GM10248 (cell line): ENCODE measurements at regions of chr2 and their contacts with region 1.

Region 1: DNA sequence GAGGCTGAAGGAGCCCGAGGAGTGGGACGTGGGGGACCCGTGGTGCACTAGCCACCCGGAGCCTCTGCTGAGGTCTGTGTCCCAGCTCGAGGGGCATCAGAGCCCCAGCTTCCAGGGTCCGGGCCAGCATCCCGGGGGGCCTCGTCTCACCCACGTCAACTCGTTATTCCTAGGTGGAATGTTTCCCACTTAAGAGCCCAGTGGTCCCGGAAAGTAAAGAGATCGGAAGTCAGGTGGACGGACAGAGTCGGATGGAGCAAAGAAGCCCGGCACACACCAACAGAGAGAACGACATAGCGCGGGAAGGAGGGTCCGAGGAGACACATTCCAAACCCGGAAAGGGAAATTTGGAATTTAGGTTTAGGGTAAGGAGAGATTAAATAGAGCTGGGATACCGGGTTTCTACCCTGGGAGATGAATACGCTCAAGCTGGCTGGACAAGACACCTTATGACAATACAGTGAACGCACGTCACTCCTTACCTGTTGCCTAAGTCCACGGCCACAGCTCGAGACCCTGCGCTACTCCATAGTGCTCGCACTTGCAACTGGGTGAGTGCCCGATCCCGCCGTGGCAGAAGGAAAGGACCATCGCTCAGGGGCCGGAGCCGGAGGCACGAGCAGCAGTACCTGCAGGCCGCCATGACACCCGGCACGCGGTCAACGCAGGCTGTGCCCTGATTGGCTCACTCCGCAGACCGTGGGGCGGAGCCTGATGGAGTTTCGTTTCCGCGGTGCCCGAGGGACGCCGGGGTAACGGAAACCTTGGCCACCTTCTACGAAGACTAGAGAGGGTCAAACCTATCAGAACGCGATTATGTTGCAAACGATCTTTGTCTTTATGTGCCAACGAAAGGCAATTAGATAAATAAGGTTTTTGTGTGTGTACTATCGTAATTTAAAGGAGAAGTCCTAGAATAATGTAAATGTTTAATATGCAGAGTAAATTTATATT is at the start of gene PNPT1:
- DNase-seq: peak; percentile 98
- CTCF ChIP-seq: no peak

Region 2: DNA sequence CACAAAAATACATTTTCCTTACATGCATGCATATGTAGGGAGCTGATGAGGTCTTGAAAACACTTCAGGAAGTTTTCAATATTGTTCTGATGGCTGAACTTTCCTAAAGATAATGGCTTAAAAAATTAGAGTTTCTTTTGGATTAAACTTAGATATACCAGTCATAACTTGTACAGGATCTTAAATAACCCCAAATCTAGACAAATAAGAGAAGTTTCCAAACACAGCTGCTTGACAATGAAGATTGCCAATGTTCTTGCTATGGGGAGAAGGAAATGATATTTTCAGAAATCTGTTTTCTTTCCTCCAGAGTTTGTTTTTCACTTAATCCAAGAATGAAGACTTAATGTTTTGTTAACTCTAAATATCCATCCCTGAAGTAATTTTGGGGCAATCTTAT is 1291.9 kb before region 1 on chr2:
- CTCF ChIA-PET with region 1: no interaction called
- POLR2A ChIA-PET with region 1: interaction called, 10 read pairs
- DNase-seq: no peak
- CTCF ChIP-seq: no peak